ENCODE measurements at regions of chr9 and their contacts with region 1.

Region 1: GRCh38 chr9:115198001-115198400 is 80.0 kb upstream of the TNC start:
- DNase-seq: peak; percentile 10
- H3K4me3 ChIP-seq: no peak overlapping the region
- H3K27ac ChIP-seq: no peak overlapping the region
- H3K4me1 ChIP-seq: no peaks in the 10 kb centered on the region
- H3K27me3 ChIP-seq: no peaks in the 10 kb centered on the region
- CTCF ChIP-seq: no peak
- POLR2A ChIP-seq: no peak

Region 2: DNA sequence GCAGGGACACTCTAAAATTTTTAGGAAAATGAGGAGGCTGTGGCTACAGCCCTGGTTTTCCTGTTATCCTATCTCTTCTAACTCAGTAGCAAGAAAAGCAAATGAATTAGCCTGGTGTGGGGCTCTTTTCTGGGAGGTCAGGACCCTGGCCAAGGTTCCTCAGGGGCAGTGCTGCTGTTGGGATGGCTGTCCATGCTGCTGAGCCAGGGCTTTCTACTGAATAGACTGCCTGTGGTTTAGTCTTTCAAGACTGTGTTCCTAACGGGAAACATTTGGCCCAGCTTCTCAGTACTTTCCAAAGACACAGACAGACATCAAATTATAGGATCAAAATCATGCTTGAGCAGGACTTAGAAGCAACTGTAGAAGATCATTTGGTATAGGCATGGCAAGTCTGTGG is 98.1 kb before region 1 on chr9:
- intact Hi-C with region 1: loop called (anchors 10 kb)
- DNase-seq: no peak
- H3K4me3 ChIP-seq: no peak overlapping the region
- H3K27ac ChIP-seq: no peak overlapping the region
- H3K4me1 ChIP-seq: no peaks in the 10 kb centered on the region
- H3K27me3 ChIP-seq: no peaks in the 10 kb centered on the region
- CTCF ChIP-seq: no peak
- POLR2A ChIP-seq: no peak

Region 3: GRCh38 chr9:115164511-115164974 is 33.5 kb before region 1 on chr9:
- intact Hi-C with region 1: loop called (anchors 5 kb)
- DNase-seq: peak; percentile 55
- H3K4me3 ChIP-seq: no peak overlapping the region
- H3K27ac ChIP-seq: no peak overlapping the region
- H3K4me1 ChIP-seq: no peaks in the 10 kb centered on the region
- H3K27me3 ChIP-seq: no peaks in the 10 kb centered on the region
- CTCF ChIP-seq: no peak
- POLR2A ChIP-seq: no peak

Measured in prostate gland (tissue), 2 donors.